ENCODE measurements at regions of chr4 and their contacts with region 1.

Region 1: GRCh38 chr4:7843831-7844593 is 95.6 kb downstream of the AFAP1 start:
- DNase-seq: peak; percentile 82
- ATAC-seq: peak; percentile 72
- H3K4me3 ChIP-seq: peak overlapping the region; percentile 45; the same call in 1 of the 2 replicates
- H3K27ac ChIP-seq: peak overlapping the region; percentile 96
- H3K4me1 ChIP-seq: peaks cover 44% of the 10 kb centered on the region
- H3K27me3 ChIP-seq: no peaks in the 10 kb centered on the region
- CTCF ChIP-seq: peak; percentile 67

Region 2: DNA sequence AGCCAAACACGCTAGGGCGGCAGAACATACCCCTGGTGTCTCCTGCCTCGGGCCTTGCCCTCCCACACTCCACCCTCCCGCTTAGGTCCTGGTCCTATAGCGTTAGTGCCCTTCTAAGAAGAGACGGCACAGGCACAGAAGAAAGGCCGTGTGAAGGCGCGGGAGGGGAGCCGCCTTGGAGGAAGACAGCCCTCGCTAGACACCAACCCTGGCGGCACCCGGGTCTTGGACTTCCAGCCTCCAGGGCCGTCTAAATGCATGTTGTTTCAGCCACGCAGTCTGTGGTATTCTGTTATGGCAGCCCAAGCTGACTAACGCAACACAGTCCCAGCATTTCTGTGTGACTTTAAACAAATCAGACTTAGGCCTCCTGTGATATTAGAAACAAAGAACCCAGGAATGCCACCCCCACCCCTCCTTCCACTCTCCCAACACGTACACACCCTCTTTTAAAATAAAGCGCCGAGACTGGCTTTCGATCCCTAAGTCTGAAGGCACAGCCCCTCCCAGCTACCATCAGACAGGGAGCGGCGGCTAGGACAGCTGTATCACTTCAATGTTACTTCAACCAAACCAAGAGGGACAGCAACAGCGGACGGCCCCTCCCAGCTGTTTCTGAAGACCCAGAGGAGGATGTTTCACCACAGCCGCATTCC is 32.3 kb before region 1 on chr4:
- CTCF ChIA-PET with region 1: no interaction called
- POLR2A ChIA-PET with region 1: no interaction called
- intact Hi-C with region 1: no loop called
- DNase-seq: no peak
- ATAC-seq: no peak
- H3K4me3 ChIP-seq: no peak overlapping the region
- H3K27ac ChIP-seq: no peak overlapping the region
- H3K4me1 ChIP-seq: peaks cover 6% of the 10 kb centered on the region
- H3K27me3 ChIP-seq: no peaks in the 10 kb centered on the region
- CTCF ChIP-seq: no peak

Region 3: GRCh38 chr4:7827991-7828720 is 15.9 kb before region 1 on chr4:
- CTCF ChIA-PET with region 1: no interaction called
- POLR2A ChIA-PET with region 1: no interaction called
- intact Hi-C with region 1: loop called (anchors 1 kb)
- DNase-seq: peak; percentile 85
- ATAC-seq: peak; percentile 96
- H3K4me3 ChIP-seq: peak overlapping the region; percentile 44; the same call in 1 of the 2 replicates
- H3K27ac ChIP-seq: peak overlapping the region; percentile 64
- H3K4me1 ChIP-seq: peaks cover 21% of the 10 kb centered on the region
- H3K27me3 ChIP-seq: no peaks in the 10 kb centered on the region
- CTCF ChIP-seq: no peak

Region 4: DNA sequence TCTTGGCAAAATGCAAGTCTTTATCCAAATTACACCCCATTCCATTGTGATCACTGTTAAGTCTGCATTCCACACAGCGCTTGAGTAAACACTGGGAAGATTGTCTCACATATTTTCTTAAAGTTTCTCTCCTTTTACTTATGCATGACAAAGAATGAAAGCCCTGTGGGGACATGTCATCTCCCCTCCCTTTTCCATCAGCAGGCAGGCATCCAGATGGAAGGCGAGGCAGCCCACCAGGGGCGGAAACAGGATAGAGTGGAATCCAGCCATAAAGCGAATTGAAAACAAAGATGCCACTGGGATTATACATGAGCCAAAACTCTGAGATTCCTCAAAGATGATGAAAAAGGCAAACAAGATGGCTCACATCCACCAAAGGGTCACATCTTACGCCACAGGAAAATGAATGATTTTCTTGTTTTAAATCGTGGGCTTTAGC is 17.4 kb after region 1 on chr4:
- CTCF ChIA-PET with region 1: no interaction called
- POLR2A ChIA-PET with region 1: no interaction called
- intact Hi-C with region 1: loop called (anchors 1 kb)
- DNase-seq: peak; percentile 90
- ATAC-seq: peak; percentile 82
- H3K4me3 ChIP-seq: peak overlapping the region; percentile 45
- H3K27ac ChIP-seq: peak overlapping the region; percentile 78
- H3K4me1 ChIP-seq: peaks cover 58% of the 10 kb centered on the region
- H3K27me3 ChIP-seq: no peaks in the 10 kb centered on the region
- CTCF ChIP-seq: no peak

Region 5: DNA sequence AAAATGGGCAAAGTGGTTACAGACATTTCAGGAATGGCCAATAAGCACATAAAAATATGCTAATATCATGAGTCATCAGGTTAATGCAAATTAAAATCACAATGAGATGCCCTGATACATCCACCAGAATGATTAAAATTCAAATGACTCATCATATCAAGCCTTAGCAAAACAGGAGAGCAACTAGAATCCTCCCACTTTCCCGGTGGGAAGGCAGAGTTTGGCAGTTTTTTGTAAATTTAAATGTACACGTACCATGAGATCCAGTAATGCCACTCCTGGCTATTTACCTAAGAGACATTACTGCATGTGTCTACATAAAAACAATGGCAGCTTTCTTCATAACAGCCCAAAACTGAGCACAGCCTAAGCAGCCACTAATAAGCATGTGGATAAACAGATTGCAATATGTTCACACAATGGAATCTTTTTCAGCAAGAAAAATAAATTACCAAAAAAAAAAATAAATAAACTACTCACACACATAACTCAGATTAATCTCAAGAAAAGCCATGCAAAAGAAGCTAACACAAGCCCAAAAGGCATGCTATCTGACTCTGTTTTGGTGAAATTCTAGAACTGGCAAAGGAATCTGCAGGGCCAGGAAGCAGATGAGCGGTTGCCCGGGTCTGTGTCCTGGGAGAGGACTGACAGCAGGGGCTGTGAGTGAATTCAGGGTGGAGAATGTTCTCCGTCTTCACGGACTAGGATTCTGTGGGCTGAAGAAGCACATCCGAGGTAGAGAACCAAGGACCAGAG is 46.8 kb after region 1 on chr4:
- CTCF ChIA-PET with region 1: no interaction called
- POLR2A ChIA-PET with region 1: no interaction called
- intact Hi-C with region 1: loop called (anchors 2 kb)
- DNase-seq: peak; percentile 75
- ATAC-seq: peak; percentile 80
- H3K4me3 ChIP-seq: no peak overlapping the region; the same call in 1 of the 2 replicates
- H3K27ac ChIP-seq: peak overlapping the region; percentile 71
- H3K4me1 ChIP-seq: peaks cover 34% of the 10 kb centered on the region
- H3K27me3 ChIP-seq: no peaks in the 10 kb centered on the region
- CTCF ChIP-seq: no peak

Measured in PC-3 (cell line).